ENCODE measurements at regions of chr13 and their contacts with region 1.

Region 1: GRCh38 chr13:111474136-111475002 is 153.9 kb downstream of the TEX29 start:
- DNase-seq: peak; percentile 25 to 47
- H3K4me3 ChIP-seq: no peak overlapping the region
- H3K27ac ChIP-seq: no peak overlapping the region
- H3K4me1 ChIP-seq: no peaks in the 10 kb centered on the region
- H3K27me3 ChIP-seq: no peaks in the 10 kb centered on the region
- CTCF ChIP-seq: peak in 2 of 3 experiments; percentile 55 to 57; a peak in 3 of 4 replicates
- EP300 ChIP-seq: no peak
- POLR2A ChIP-seq: no peak
- RAD21 ChIP-seq: peak; percentile 87 to 93

Region 2: GRCh38 chr13:111247562-111247961 is 226.8 kb before region 1 on chr13:
- CTCF ChIA-PET with region 1: no interaction called
- POLR2A ChIA-PET with region 1: no interaction called
- DNase-seq: peak in 1 of 2 experiments; percentile 17
- H3K4me3 ChIP-seq: no peak overlapping the region
- H3K27ac ChIP-seq: no peak overlapping the region
- H3K4me1 ChIP-seq: no peaks in the 10 kb centered on the region; a peak in 2 of 7 replicates
- H3K27me3 ChIP-seq: no peaks in the 10 kb centered on the region
- CTCF ChIP-seq: no peak
- EP300 ChIP-seq: no peak
- POLR2A ChIP-seq: no peak
- RAD21 ChIP-seq: no peak

Region 3: GRCh38 chr13:111461445-111462149 is 12.8 kb before region 1 on chr13:
- CTCF ChIA-PET with region 1: interaction called, 18 read pairs
- POLR2A ChIA-PET with region 1: no interaction called
- DNase-seq: peak in 1 of 2 experiments; percentile 35
- H3K4me3 ChIP-seq: no peak overlapping the region
- H3K27ac ChIP-seq: no peak overlapping the region
- H3K4me1 ChIP-seq: peaks cover 0 to 2% (median under 1%) of the 10 kb centered on the region in 4 experiments; a peak in 2 of 7 replicates
- H3K27me3 ChIP-seq: no peaks in the 10 kb centered on the region
- CTCF ChIP-seq: no peak
- EP300 ChIP-seq: no peak
- POLR2A ChIP-seq: no peak
- RAD21 ChIP-seq: no peak

Region 4: GRCh38 chr13:111485491-111486250 is 11.3 kb after region 1 on chr13:
- CTCF ChIA-PET with region 1: interaction called, 20 read pairs
- POLR2A ChIA-PET with region 1: no interaction called
- DNase-seq: no peak
- H3K4me3 ChIP-seq: no peak overlapping the region
- H3K27ac ChIP-seq: no peak overlapping the region
- H3K4me1 ChIP-seq: 0 out of 7 replicates have a peak, but pooled peaks cover 0 to 6% (median 0%) of the 10 kb centered on the region in 4 experiments
- H3K27me3 ChIP-seq: no peaks in the 10 kb centered on the region; a peak in 1 of 7 replicates
- CTCF ChIP-seq: no peak
- EP300 ChIP-seq: no peak
- POLR2A ChIP-seq: no peak
- RAD21 ChIP-seq: no peak

Region 5: GRCh38 chr13:111491021-111491420 is 16.7 kb after region 1 on chr13:
- CTCF ChIA-PET with region 1: interaction called, 20 read pairs
- POLR2A ChIA-PET with region 1: no interaction called
- DNase-seq: no peak
- H3K4me3 ChIP-seq: no peak overlapping the region
- H3K27ac ChIP-seq: no peak overlapping the region
- H3K4me1 ChIP-seq: 0 out of 7 replicates have a peak, but pooled peaks cover 0 to 6% (median 0%) of the 10 kb centered on the region in 4 experiments
- H3K27me3 ChIP-seq: no peaks in the 10 kb centered on the region
- CTCF ChIP-seq: no peak
- EP300 ChIP-seq: no peak
- POLR2A ChIP-seq: no peak
- RAD21 ChIP-seq: no peak

Region 6: DNA sequence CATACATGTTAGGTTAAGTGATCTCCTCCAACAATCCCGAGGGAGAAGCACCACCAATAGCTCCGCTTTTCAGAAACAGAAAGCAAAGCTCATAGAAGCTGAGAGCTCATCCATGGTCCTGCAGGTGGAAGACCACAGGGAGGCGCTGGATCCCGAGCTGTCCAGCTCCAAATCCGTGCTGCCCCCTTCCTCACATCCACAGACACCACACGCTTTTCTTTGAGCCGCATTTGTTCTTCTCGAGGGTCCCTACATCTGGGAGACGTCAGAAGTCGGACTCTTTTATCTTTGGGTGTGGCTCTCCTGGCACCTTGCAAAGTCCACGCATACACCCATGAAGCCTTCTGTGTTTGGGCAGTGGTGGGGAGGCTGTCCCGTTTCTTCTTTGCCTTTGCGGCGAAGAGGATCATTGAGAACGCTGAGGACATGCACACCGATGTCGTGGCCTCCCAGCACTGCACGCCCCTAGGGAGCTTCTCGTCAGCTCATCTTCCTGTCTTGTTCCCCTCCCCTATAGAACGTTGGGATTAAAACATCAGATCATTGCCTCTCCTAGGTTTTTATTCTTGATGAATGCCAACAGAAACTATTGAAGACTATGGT is 30.9 kb after region 1 on chr13:
- CTCF ChIA-PET with region 1: interaction called, 47 read pairs
- POLR2A ChIA-PET with region 1: no interaction called
- DNase-seq: peak; percentile 59 to 77
- H3K4me3 ChIP-seq: no peak overlapping the region
- H3K27ac ChIP-seq: no peak overlapping the region
- H3K4me1 ChIP-seq: no peaks in the 10 kb centered on the region
- H3K27me3 ChIP-seq: no peaks in the 10 kb centered on the region
- CTCF ChIP-seq: peak in 2 of 3 experiments; percentile 98 to 100; a peak in 3 of 4 replicates
- EP300 ChIP-seq: no peak
- POLR2A ChIP-seq: no peak
- RAD21 ChIP-seq: peak; percentile 93 to 95

Region 7: GRCh38 chr13:111521030-111521429 is 46.7 kb after region 1 on chr13:
- CTCF ChIA-PET with region 1: no interaction called
- POLR2A ChIA-PET with region 1: no interaction called
- DNase-seq: no peak
- H3K4me3 ChIP-seq: no peak overlapping the region
- H3K27ac ChIP-seq: no peak overlapping the region
- H3K4me1 ChIP-seq: peaks cover 0 to 4% (median 1%) of the 10 kb centered on the region in 4 experiments; a peak in 3 of 7 replicates
- H3K27me3 ChIP-seq: no peaks in the 10 kb centered on the region
- CTCF ChIP-seq: no peak
- EP300 ChIP-seq: no peak
- POLR2A ChIP-seq: no peak
- RAD21 ChIP-seq: no peak